Gastrocnemius medialis (tissue), 4 donors: ENCODE measurements at regions of chr2 and their contacts with region 1.

Region 1: GRCh38 chr2:201872591-201872990 is 66.3 kb downstream of the CDK15 start:
- DNase-seq: no peak
- ATAC-seq: no peak
- H3K4me3 ChIP-seq: no peak overlapping the region
- H3K27ac ChIP-seq: no peak overlapping the region
- H3K4me1 ChIP-seq: peaks cover 0 to 7% of the 10 kb centered on the region in 2 donors
- H3K27me3 ChIP-seq: no peaks in the 10 kb centered on the region
- CTCF ChIP-seq: no peak
- POLR2A ChIP-seq: no peak

Region 2: GRCh38 chr2:201950606-201951005 is 78.0 kb after region 1 on chr2:
- in situ Hi-C with region 1: no loop called
- intact Hi-C with region 1: loop called (anchors 5 kb)
- DNase-seq: no peak
- ATAC-seq: no peak
- H3K4me3 ChIP-seq: no peak overlapping the region
- H3K27ac ChIP-seq: no peak overlapping the region
- H3K4me1 ChIP-seq: peaks cover 5 to 24% of the 10 kb centered on the region in 2 donors
- H3K27me3 ChIP-seq: no peaks in the 10 kb centered on the region
- CTCF ChIP-seq: no peak
- POLR2A ChIP-seq: no peak